Heart left ventricle (tissue), 16 donors: ENCODE measurements at regions of chr18 and their contacts with region 1.

Region 1: DNA sequence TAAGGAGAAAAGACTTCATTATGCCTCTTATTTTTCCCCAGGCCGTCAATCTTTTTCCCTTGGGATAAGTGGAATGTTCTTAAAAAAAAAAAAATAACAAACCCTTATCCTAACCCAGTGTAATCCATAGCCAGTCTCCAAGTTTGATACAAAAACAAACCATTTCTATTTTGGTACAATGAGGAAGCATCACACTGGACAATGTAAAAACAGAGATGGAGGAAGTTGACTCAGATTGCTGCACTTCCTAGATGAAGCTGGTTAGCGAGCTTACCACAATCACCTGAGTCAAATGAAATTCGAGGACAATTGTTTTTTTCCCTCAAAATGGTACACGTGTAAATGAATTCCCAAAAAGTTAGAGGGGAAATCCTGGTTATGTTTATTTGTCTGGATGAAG is 259.7 kb downstream of the TCF4 start:
- DNase-seq: peak in 1 of 5 donors; percentile 33
- ATAC-seq: peak; percentile 79 to 94 (median 87)
- H3K4me3 ChIP-seq: no peak overlapping the region
- H3K27ac ChIP-seq: peak overlapping the region; percentile 45 to 80 (median 67)
- H3K4me1 ChIP-seq: peaks cover 0 to 69% (median 53%) of the 10 kb centered on the region in 12 donors
- H3K27me3 ChIP-seq: no peaks in the 10 kb centered on the region
- CTCF ChIP-seq: no peak
- POLR2A ChIP-seq: no peak

Region 2: GRCh38 chr18:55243857-55244256 is 84.4 kb before region 1 on chr18:
- intact Hi-C with region 1: loop called in 6 of 10 experiments (anchors 5 kb)
- DNase-seq: peak in 4 of 5 donors; percentile 72 to 83 (median 78)
- ATAC-seq: peak; percentile 76 to 89 (median 86)
- H3K4me3 ChIP-seq: no peak overlapping the region
- H3K27ac ChIP-seq: peak overlapping the region; percentile 49 to 84 (median 77)
- H3K4me1 ChIP-seq: peaks cover 12 to 98% (median 74%) of the 10 kb centered on the region in 12 donors
- H3K27me3 ChIP-seq: no peaks in the 10 kb centered on the region
- CTCF ChIP-seq: no peak
- POLR2A ChIP-seq: no peak